WTC11 (cell line): ENCODE measurements at regions of chr17 and their contacts with region 1.

Region 1: GRCh38 chr17:42129109-42129837 is 6.7 kb downstream of the HSPB9 start:
- DNase-seq: no peak
- ATAC-seq: no peak
- H3K4me3 Mint-ChIP-seq: no peak overlapping the region
- H3K27ac Mint-ChIP-seq: no peak overlapping the region
- H3K4me1 Mint-ChIP-seq: peaks cover 20% of the 10 kb centered on the region
- H3K27me3 Mint-ChIP-seq: no peaks in the 10 kb centered on the region
- CTCF ChIP-seq: no peak

Region 2: DNA sequence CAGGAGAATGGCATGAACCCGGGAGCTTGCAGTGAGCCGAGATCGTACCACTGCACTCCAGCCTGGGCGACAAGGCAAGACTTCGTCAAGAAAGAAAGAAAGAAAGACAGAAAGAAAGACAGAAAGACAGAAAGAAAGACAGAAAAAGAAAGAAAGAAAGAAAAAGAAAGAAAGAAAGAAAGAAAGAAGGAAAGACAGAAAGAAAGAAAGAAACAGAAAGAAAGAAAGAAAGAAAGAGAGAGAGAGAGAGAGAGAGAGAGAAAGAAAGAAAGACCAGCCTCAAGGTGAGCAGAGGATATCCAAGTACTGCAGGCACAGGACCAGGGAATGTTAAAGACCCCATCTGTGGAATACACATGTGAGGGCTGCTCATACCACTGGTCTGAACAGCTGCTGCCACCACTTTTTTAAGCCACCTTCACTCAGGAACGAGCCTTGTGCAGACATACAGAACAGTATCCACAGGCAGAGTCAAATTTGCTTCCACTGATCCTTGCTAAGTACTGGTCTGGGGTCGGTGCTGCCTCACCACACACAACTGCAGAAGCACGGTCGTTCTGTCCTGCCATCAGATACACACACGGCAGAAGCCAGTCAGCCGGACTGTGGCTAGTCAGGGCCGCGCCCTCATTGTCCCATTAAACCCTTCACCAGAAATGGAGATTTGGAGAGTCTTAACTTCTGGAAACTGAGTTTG is 17.8 kb after region 1 on chr17:
- CTCF ChIA-PET with region 1: no interaction called
- POLR2A ChIA-PET with region 1: no interaction called
- DNase-seq: no peak
- ATAC-seq: no peak
- H3K4me3 Mint-ChIP-seq: no peak overlapping the region
- H3K27ac Mint-ChIP-seq: 0 out of 2 replicates have a peak overlapping the region, but pooled peaks have one; percentile 21
- H3K4me1 Mint-ChIP-seq: no peaks in the 10 kb centered on the region
- H3K27me3 Mint-ChIP-seq: no peaks in the 10 kb centered on the region
- CTCF ChIP-seq: no peak

Region 3: DNA sequence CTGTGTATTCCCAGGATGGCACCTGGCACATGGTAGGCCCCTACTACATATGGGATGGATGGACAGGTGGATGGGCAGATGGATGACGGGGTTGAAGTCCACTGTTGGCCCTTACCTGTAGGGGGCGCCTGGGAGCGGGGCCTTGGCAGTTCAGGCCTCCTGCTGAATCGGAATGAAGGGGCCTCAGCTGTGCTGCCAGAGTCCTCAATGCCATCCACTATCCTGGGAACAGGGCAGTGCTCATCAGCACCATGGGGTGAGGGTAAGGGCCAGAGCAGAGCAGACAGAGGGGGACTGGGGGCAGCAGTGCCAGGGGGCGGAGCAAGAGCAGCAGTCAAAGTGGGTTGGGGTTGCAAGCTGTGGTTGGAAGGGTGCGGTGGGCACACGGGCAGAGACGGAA is 33.8 kb after region 1 on chr17:
- CTCF ChIA-PET with region 1: interaction called, 13 read pairs
- POLR2A ChIA-PET with region 1: interaction called, 3 read pairs
- DNase-seq: peak; percentile 87
- ATAC-seq: peak; percentile 86
- H3K4me3 Mint-ChIP-seq: no peak overlapping the region
- H3K27ac Mint-ChIP-seq: 0 out of 2 replicates have a peak overlapping the region, but pooled peaks have one; percentile 54
- H3K4me1 Mint-ChIP-seq: 0 out of 2 replicates have a peak, but pooled peaks cover 3% of the 10 kb centered on the region
- H3K27me3 Mint-ChIP-seq: no peaks in the 10 kb centered on the region; the same call in 1 of the 2 replicates
- CTCF ChIP-seq: peak; percentile 81